Activated CD4-positive, alpha-beta memory T cell treated with anti-CD3 and anti-CD28 coated beads, Interleukin-2, amount 10 ng/mL, durations not matched to agents 7 days and 5 days (primary cell): ENCODE measurements at regions of chr13 and their contacts with region 1.

Region 1: DNA sequence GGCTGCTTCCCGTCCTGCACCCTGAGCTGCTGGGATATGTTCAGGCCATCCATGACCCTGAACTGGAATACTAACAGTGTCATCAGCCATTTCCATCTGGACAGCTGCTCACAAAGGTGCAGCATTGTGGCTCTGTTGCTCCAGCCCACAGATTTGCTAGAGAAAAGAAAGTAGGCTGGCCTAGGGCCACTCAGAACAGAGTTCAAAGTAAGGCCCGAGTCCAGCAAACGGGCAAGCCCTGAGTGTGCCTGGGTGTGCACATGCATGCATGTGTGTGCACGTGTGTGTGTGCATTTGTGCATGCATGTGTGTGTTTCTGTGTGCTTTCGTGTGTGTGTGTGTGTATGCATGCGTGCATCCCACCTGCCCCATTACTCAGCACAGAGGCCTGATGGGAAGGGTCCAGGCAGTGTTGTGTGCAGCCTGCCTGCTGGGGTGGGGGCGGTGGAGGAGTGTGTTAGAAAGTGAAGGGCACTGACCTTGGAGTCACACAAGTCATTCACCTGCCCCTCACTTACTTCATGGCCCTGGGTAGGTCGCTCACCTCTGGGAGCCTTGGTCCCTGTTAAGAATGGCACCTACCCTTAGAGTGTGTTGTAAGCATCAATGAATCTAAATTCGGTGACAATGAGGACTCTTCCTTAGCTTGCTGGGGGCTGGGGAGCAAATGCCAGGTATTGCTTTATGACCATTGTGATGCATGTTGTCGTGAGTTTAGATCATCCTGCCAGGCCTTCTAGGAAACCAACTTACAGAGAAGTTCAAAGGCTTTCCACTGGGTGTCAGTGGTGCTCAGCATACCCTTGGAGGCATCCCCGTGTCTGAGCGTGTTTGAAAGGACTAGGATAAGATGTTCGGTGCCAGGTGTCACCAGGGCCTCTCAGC is 53.2 kb downstream of the GPR12 start:
- DNase-seq: peak; percentile 35
- H3K4me3 Mint-ChIP-seq: no peak overlapping the region
- H3K27ac Mint-ChIP-seq: no peak overlapping the region
- H3K4me1 Mint-ChIP-seq: no peaks in the 10 kb centered on the region
- H3K27me3 Mint-ChIP-seq: peaks cover 7% of the 10 kb centered on the region

Region 2: GRCh38 chr13:26872525-26873385 is 165.4 kb after region 1 on chr13:
- CTCF ChIA-PET with region 1: interaction called, 26 read pairs
- POLR2A ChIA-PET with region 1: no interaction called
- DNase-seq: peak; percentile 59
- H3K4me3 Mint-ChIP-seq: no peak overlapping the region
- H3K27ac Mint-ChIP-seq: no peak overlapping the region
- H3K4me1 Mint-ChIP-seq: no peaks in the 10 kb centered on the region
- H3K27me3 Mint-ChIP-seq: peaks cover 4% of the 10 kb centered on the region

Region 3: DNA sequence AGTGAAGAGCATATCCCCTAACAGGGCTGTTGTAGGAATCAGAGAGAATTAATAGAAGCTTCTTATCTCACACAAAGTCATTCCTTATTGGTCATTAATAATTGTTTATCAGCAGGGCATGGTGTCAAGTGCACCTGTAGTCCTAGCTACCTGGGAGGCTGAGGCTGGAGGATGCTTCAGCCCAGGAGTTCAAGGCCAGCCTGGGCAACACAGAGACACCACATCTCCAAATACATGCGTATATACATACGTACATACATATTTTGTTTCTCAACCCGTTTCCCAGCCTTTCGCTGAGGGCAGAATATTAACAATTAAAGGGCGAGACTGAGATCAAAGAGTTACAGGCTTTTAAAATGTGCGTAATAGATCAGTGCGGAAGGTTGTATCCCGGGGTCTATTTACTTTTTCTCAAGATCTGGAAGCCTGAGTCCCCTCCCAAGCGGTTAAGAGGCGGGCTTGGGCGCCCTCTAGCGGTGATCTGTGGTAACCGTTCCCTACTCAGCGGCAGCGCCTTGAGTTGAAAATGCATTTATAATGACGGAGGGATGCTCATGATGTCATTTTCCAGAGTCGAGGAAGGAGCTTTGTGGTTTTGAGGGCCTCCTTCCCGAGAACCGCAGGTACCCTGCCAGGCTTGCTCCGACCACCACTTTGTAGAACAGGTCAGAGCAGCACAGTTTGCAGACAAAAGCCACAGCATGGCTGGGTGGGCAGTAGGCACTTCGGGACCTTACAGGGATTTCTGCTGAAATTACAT is 222.8 kb after region 1 on chr13:
- CTCF ChIA-PET with region 1: interaction called, 12 read pairs
- POLR2A ChIA-PET with region 1: no interaction called
- DNase-seq: peak; percentile 65
- H3K4me3 Mint-ChIP-seq: no peak overlapping the region
- H3K27ac Mint-ChIP-seq: no peak overlapping the region
- H3K4me1 Mint-ChIP-seq: peaks cover 4% of the 10 kb centered on the region
- H3K27me3 Mint-ChIP-seq: peaks cover 9% of the 10 kb centered on the region